PC-9 (cell line): ENCODE measurements at regions of chr19 and their contacts with region 1.

Region 1: GRCh38 chr19:8832132-8833021 is at the starts of genes MBD3L1 and ZNF558:
- DNase-seq: peak; percentile 97 to 99
- H3K4me3 ChIP-seq: peak within 1 kb of the TSS; percentile 87
- H3K27ac ChIP-seq: peak within 1 kb of the TSS; percentile 91
- H3K4me1 ChIP-seq: peaks cover 13% of the 10 kb centered on the region
- H3K27me3 ChIP-seq: no peaks in the 10 kb centered on the region
- CTCF ChIP-seq: no peak; the same call in 1 of the 2 replicates
- total RNA-seq, gene MBD3L1: not detected in 2 replicates
- total RNA-seq, gene ZNF558: 28.7 and 29.7 TPM in 2 replicates

Region 2: DNA sequence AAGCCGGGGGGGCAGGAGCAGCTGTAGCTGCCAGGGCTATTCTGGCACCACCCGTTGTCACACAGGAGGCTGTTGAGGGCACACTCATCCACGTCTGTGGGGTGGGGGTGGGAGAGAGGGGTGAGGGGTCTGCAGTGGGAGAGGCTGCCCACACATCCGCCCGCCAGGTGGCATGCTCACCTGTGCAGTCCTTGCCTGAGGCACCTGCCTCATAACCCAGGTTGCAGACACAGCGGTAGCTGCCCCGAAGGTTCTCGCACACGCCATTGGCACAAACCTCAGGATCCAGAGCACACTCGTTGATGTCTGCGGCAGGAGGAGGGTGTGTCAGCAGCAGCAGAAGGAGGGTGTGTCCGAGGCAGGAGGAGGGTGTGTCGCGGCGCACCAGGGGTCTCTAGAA is 703.3 kb before region 1 on chr19:
- CTCF ChIA-PET with region 1: no interaction called
- POLR2A ChIA-PET with region 1: no interaction called
- intact Hi-C with region 1: no loop called
- DNase-seq: no peak
- H3K4me3 ChIP-seq: no peak overlapping the region
- H3K27ac ChIP-seq: no peak overlapping the region
- H3K4me1 ChIP-seq: no peaks in the 10 kb centered on the region
- H3K27me3 ChIP-seq: peaks cover 97% of the 10 kb centered on the region
- CTCF ChIP-seq: no peak; the same call in 1 of the 2 replicates

Region 3: GRCh38 chr19:8321060-8321985 is 511.1 kb before region 1 on chr19 and contains the starts of genes NDUFA7 and RPS28:
- CTCF ChIA-PET with region 1: no interaction called
- POLR2A ChIA-PET with region 1: interaction called, 27 read pairs
- intact Hi-C with region 1: no loop called
- DNase-seq: peak; percentile 88 to 95
- H3K4me3 ChIP-seq: peak within 1 kb of the TSS; percentile 92
- H3K27ac ChIP-seq: peak within 1 kb of the TSS; percentile 55
- H3K4me1 ChIP-seq: peaks cover 20% of the 10 kb centered on the region
- H3K27me3 ChIP-seq: no peaks in the 10 kb centered on the region
- CTCF ChIP-seq: peak; percentile 40; the same call in 1 of the 2 replicates
- total RNA-seq, gene NDUFA7: 49.8 and 61.7 TPM in 2 replicates
- total RNA-seq, gene RPS28: 1,283 and 1,512 TPM in 2 replicates

Region 4: DNA sequence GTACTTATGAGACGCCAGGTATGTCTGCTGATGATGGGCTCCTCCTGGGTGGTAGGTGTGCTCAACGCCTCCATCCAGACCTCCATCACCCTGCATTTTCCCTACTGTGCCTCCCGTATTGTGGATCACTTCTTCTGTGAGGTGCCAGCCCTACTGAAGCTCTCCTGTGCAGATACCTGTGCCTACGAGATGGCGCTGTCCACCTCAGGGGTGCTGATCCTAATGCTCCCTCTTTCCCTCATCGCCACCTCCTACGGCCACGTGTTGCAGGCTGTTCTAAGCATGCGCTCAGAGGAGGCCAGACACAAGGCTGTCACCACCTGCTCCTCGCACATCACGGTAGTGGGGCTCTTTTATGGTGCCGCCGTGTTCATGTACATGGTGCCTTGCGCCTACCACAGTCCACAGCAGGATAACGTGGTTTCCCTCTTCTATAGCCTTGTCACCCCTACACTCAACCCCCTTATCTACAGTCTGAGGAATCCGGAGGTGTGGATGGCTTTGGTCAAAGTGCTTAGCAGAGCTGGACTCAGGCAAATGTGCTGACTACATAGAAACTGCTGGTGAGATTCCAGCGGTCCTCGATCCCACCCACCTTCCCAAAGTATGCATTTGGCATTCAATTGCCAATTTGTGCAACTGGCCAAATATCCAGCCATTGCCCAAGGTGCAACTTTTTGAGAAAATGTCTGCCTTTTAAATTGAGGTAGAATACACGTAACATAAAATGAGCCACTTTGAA is 100.8 kb before region 1 on chr19:
- CTCF ChIA-PET with region 1: no interaction called
- POLR2A ChIA-PET with region 1: interaction called, 26 read pairs
- intact Hi-C with region 1: no loop called
- DNase-seq: peak in 1 of 2 experiments; percentile 8
- H3K4me3 ChIP-seq: no peak overlapping the region
- H3K27ac ChIP-seq: no peak overlapping the region
- H3K4me1 ChIP-seq: no peaks in the 10 kb centered on the region
- H3K27me3 ChIP-seq: peaks cover 39% of the 10 kb centered on the region
- CTCF ChIP-seq: no peak

Region 5: DNA sequence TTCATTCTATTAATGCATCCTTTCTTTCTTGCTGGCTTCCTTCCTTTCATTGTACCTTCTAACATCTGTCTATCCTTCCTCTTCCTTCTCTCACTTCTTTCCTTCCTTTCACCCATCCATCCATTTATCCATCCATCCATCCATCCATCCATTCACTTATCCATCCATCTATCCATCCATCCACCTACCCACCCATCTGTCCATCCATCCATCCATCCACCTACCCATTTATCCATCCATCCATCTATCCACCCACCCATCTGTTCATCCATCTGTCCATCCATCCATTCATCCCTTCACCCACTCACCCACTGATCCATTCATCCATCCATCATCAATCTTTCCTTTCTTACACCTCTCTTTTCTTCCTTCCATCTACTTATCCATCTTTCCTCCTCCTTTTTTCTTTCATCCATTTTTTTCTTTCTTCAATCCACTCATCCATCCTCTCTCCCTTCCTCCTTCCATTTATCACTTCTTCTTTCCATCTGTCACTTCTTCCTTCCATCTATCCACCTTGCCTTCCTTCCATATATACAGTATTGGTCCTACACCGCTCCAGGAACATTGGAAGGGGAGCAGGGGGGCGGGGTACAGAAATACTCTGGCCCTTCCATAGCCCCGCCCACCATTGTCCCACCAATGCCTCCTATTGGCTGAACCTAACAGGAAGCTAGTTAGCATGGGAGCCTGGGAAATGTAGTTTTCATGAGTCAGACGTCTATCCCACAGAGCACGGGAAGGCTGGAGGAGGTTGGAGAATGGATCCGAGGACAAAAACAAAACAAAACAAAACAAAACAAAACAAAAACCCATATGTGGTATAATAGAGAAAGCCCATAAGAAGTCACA is 45.7 kb after region 1 on chr19:
- CTCF ChIA-PET with region 1: no interaction called
- POLR2A ChIA-PET with region 1: no interaction called
- intact Hi-C with region 1: no loop called
- DNase-seq: no peak
- H3K4me3 ChIP-seq: no peak overlapping the region
- H3K27ac ChIP-seq: no peak overlapping the region
- H3K4me1 ChIP-seq: no peaks in the 10 kb centered on the region
- H3K27me3 ChIP-seq: no peaks in the 10 kb centered on the region
- CTCF ChIP-seq: no peak

Region 6: GRCh38 chr19:9009935-9010651 is 177.7 kb after region 1 on chr19 and contains the start of gene MUC16:
- CTCF ChIA-PET with region 1: no interaction called
- POLR2A ChIA-PET with region 1: interaction called, 3 read pairs
- intact Hi-C with region 1: loop called (anchors 10 kb)
- DNase-seq: peak; percentile 88 to 89
- H3K4me3 ChIP-seq: peak within 1 kb of the TSS; percentile 80
- H3K27ac ChIP-seq: peak within 1 kb of the TSS; percentile 67
- H3K4me1 ChIP-seq: peaks cover 33% of the 10 kb centered on the region
- H3K27me3 ChIP-seq: no peaks in the 10 kb centered on the region
- CTCF ChIP-seq: peak; percentile 3; the same call in 1 of the 2 replicates
- total RNA-seq, gene MUC16: 75.0 and 85.0 TPM in 2 replicates

Region 7: DNA sequence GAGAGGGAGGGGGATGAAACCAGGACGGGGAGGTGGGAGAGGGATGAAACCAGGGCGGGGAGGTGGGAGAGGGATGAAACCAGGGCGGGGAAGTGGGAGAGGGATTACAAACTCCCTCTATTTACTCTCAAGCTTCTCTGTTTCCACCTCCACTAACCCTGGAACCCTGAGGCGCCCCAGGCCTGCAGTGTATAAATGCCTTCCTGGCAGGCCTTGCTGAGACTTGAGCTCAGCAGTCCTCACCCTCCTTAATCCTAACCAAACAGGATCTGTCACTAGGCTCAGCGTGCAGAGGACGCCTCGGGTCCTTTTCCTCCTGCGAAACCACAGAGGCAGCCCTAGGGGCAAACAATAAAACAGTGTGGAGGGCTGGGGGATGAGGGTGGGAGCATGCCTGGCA is 222.4 kb after region 1 on chr19:
- CTCF ChIA-PET with region 1: no interaction called
- POLR2A ChIA-PET with region 1: interaction called, 13 read pairs
- intact Hi-C with region 1: no loop called
- DNase-seq: peak; percentile 90 to 98
- H3K4me3 ChIP-seq: peak overlapping the region; percentile 35; the same call in 1 of the 2 replicates
- H3K27ac ChIP-seq: peak overlapping the region; percentile 92
- H3K4me1 ChIP-seq: peaks cover 73% of the 10 kb centered on the region
- H3K27me3 ChIP-seq: no peaks in the 10 kb centered on the region
- CTCF ChIP-seq: no peak

Region 8: DNA sequence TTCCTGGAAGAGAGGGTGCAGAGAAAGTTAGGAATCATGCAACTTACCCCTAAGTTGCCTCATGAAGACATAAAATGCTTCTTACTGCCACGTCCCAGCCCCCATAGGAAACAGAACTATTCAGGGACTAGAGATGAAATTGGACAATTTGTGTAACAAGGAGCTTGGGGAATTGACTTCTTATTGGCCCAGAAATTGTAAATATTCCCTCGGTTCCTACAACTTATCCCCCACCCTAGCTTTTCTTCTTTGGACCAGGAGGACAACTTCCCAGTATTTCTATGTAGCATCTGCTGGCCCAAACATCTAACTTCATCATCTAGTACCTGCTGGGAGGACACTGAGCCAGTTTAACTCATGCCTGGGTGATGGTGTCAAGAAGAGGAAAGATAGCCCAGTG is 254.4 kb after region 1 on chr19 and contains the start of gene OR1M1:
- CTCF ChIA-PET with region 1: no interaction called
- POLR2A ChIA-PET with region 1: interaction called, 13 read pairs
- intact Hi-C with region 1: no loop called
- DNase-seq: no peak
- H3K4me3 ChIP-seq: no peak within 1 kb of the TSS
- H3K27ac ChIP-seq: no peak within 1 kb of the TSS
- H3K4me1 ChIP-seq: no peaks in the 10 kb centered on the region
- H3K27me3 ChIP-seq: peaks cover 48% of the 10 kb centered on the region
- CTCF ChIP-seq: no peak
- total RNA-seq, gene OR1M1: not detected in 2 replicates